Naive thymus-derived CD4-positive, alpha-beta T cell (primary cell): ENCODE measurements at regions of chr10 and their contacts with region 1.

Region 1: DNA sequence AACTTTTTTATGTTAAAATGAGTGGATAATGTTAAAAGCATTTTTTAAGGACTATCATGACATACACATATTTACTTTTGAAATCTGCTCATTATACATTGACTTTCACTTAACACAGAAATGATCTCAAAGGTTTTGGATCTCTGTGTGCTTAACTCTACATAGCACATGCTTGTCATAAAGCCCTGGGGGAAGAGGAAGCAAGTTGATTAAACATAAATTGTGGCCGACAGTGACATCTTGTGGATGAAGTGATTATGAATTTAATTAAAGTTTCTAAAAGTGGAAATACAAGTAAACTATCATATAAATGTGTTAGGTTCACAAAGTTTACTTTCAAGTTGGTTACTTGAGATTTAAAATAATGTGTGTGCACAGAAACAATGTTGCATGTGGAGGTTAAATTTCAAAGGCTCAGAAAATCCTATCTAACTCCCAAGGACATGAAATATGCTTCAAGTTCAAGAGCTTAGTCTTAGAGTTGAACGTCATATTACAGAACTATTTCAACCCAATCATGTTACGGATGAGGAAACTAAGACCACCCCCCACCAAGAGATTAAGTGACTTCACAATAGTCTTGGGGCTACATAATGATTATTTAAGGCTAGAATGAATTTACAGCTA is 1247.7 kb downstream of the GATA3 start:
- DNase-seq: peak in 7 of 9 donors; percentile 21 to 62 (median 53)
- ATAC-seq: peak; percentile 68
- H3K4me3 ChIP-seq: no peak overlapping the region
- H3K4me3 Mint-ChIP-seq: no peak overlapping the region
- H3K27ac ChIP-seq: no peak overlapping the region
- H3K27ac Mint-ChIP-seq: no peak overlapping the region
- H3K4me1 ChIP-seq: no peaks in the 10 kb centered on the region
- H3K4me1 Mint-ChIP-seq: peaks cover 0 to 3% (median 0%) of the 10 kb centered on the region in 7 donors
- H3K27me3 ChIP-seq: no peaks in the 10 kb centered on the region
- H3K27me3 Mint-ChIP-seq: peaks cover 0 to 10% (median 5%) of the 10 kb centered on the region in 5 donors

Region 2: DNA sequence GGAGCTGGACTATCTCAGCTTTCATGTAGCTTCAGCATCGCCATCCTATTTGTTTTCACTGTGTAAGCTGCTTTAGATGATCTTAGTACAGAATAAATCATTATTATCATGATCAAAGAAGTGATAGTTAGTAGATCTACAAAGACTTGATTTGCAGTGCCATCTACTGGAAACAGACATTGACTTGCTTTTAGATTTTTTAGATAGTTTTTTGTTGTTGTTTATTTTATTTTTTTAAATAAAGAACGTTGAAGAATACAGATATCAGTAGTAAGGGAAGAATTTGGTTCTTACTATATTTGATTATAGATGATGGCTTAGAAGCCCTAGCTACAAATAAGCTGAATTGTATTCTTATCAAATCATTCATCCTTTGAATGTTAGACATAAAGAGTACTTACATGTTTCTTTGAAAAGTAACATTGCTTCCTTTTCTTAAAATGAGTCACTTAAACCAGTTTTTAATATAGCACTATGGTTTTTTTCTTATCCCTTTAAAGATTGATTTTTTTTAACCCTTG is 1885.1 kb before region 1 on chr10:
- CTCF ChIA-PET with region 1: no interaction called
- POLR2A ChIA-PET with region 1: no interaction called
- intact Hi-C with region 1: loop called in 1 of 2 experiments (anchors 5 kb)
- DNase-seq: peak in 7 of 9 donors; percentile 36 to 62 (median 46)
- ATAC-seq: peak; percentile 69
- H3K4me3 ChIP-seq: no peak overlapping the region
- H3K4me3 Mint-ChIP-seq: no peak overlapping the region
- H3K27ac ChIP-seq: no peak overlapping the region
- H3K27ac Mint-ChIP-seq: peak overlapping the region in 3 of 9 donors; percentile 27 to 79 (median 29)
- H3K4me1 ChIP-seq: peaks cover 5 to 10% of the 10 kb centered on the region in 2 donors
- H3K4me1 Mint-ChIP-seq: peaks cover 8 to 35% (median 25%) of the 10 kb centered on the region in 7 donors
- H3K27me3 ChIP-seq: no peaks in the 10 kb centered on the region
- H3K27me3 Mint-ChIP-seq: peaks cover 0 to 33% (median 0%) of the 10 kb centered on the region in 5 donors

Region 3: GRCh38 chr10:7756360-7756992 is 1545.8 kb before region 1 on chr10:
- CTCF ChIA-PET with region 1: no interaction called
- POLR2A ChIA-PET with region 1: no interaction called
- intact Hi-C with region 1: loop called (anchors 1 to 5 kb)
- DNase-seq: peak in 4 of 9 donors; percentile 3 to 24 (median 6)
- ATAC-seq: peak; percentile 38
- H3K4me3 ChIP-seq: no peak overlapping the region
- H3K4me3 Mint-ChIP-seq: no peak overlapping the region
- H3K27ac ChIP-seq: no peak overlapping the region
- H3K27ac Mint-ChIP-seq: peak overlapping the region in 1 of 9 donors; percentile 39
- H3K4me1 ChIP-seq: no peaks in the 10 kb centered on the region
- H3K4me1 Mint-ChIP-seq: no peaks in the 10 kb centered on the region
- H3K27me3 ChIP-seq: no peaks in the 10 kb centered on the region
- H3K27me3 Mint-ChIP-seq: no peaks in the 10 kb centered on the region

Region 4: DNA sequence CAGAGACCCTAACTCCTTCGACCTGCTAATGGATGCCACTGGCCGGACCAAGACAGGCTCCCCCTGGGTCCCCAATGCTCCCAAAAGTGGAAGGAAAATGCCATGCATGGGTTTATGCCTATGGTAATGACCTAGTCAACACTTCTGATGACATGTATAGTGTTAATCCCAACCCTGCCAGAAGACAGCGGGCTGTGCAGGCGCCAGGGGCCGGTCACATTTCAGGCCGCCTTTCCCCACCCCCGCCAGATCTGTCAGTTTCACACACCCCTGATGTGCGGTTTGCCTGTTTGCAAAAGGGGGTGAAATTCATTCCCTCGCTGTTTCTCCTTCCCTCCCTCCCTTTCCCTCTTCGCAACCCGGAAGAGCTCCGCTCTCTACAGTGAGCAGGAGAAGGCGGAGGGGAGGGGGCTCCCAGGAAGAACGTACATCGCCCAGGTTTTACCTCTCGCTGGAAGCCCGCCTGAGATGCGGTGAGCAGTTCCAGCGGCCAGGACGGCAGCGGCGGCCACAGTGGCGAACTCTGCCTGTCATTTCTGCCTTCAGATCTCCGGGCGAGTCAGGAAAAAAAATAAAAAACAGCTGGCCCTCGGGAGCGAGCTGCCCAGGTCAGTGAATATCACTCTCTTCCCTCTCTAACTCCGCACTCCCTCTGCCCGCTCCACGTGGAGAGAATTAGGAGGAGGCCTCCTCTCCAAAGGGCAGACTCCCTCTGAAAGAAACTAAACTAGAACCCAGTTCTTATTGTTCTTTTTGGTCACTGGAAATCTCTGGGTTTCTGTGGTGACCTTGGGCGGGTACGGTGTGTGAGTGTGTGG is 1257.1 kb before region 1 on chr10:
- CTCF ChIA-PET with region 1: no interaction called
- POLR2A ChIA-PET with region 1: no interaction called
- intact Hi-C with region 1: loop called (anchors 5 kb)
- DNase-seq: peak in 6 of 9 donors; percentile 18 to 29 (median 24)
- ATAC-seq: no peak
- H3K4me3 ChIP-seq: peak overlapping the region; percentile 26
- H3K4me3 Mint-ChIP-seq: peak overlapping the region; percentile 23 to 71 (median 59)
- H3K27ac ChIP-seq: no peak overlapping the region
- H3K27ac Mint-ChIP-seq: peak overlapping the region in 4 of 9 donors; percentile 9 to 42 (median 12)
- H3K4me1 ChIP-seq: peaks cover 56 to 59% of the 10 kb centered on the region in 2 donors
- H3K4me1 Mint-ChIP-seq: peaks cover 36 to 80% (median 64%) of the 10 kb centered on the region in 7 donors
- H3K27me3 ChIP-seq: peaks cover 54 to 86% of the 10 kb centered on the region in 2 donors
- H3K27me3 Mint-ChIP-seq: peaks cover 87 to 93% (median 90%) of the 10 kb centered on the region in 5 donors

Region 5: GRCh38 chr10:8962249-8962648 is 340.0 kb before region 1 on chr10:
- CTCF ChIA-PET with region 1: no interaction called
- POLR2A ChIA-PET with region 1: no interaction called
- intact Hi-C with region 1: no loop called
- DNase-seq: no peak
- ATAC-seq: no peak
- H3K4me3 ChIP-seq: no peak overlapping the region
- H3K4me3 Mint-ChIP-seq: no peak overlapping the region
- H3K27ac ChIP-seq: no peak overlapping the region
- H3K27ac Mint-ChIP-seq: no peak overlapping the region
- H3K4me1 ChIP-seq: no peaks in the 10 kb centered on the region
- H3K4me1 Mint-ChIP-seq: no peaks in the 10 kb centered on the region
- H3K27me3 ChIP-seq: no peaks in the 10 kb centered on the region
- H3K27me3 Mint-ChIP-seq: no peaks in the 10 kb centered on the region